PC-9 (cell line): ENCODE measurements at regions of chr15 and their contacts with region 1.

Region 1: DNA sequence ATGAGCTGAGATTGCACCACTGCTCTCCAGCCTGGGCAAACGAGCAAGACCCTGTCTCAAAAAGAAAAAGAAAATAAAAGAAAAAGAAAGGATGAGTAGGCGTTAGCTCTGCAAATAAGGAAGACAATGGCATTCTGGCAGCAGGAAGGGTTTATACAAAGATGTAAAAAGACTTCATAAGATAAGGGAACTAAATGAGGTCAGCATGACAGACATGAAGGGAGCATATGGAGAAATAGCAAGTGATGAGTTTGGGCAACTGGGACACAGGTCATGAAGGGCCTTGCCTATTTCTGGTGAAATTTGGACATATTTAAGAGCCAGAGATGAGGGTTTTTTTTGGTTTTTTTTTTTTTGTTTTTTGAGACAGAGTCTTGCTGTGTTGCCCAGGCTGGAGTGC is 24.5 kb downstream of the TMEM266 start:
- DNase-seq: no peak
- H3K4me3 ChIP-seq: no peak overlapping the region
- H3K27ac ChIP-seq: no peak overlapping the region
- H3K4me1 ChIP-seq: no peaks in the 10 kb centered on the region
- H3K27me3 ChIP-seq: no peaks in the 10 kb centered on the region
- CTCF ChIP-seq: no peak

Region 2: DNA sequence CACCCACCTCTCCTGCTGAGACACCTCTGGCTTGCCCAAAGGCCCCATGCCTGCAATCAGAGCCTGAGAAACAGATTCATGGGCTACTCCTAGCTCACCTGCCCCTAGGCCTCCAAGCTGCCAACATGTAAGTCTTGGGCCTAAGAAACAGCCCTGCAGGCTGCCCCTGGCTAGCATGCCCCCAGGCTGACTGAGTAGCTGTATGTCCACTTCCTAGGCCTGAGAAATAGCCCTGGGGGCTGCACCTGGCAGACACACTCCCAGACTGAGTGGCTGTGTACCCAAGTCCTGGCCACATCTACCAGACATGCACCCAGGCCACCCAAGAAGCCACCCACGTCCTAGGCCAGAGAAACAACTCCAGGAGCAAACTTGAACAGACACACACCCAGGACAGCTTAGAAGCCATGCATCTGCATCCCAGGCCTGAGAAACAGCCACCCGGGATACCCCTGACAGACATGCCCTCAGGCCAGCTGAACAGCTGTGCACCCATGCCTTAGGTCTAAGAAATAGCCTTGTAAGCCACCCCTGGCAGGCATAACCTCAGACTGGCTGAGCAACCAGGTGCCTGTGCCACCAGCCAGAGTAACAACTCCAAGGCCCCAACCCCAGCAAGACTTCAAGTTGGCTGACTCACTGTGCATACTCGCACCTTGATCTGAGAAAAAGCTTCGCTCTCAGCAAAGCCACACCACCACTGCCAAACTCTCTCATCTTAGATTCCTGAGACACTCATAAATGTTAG is 60.1 kb before region 1 on chr15:
- CTCF ChIA-PET with region 1: no interaction called
- POLR2A ChIA-PET with region 1: no interaction called
- intact Hi-C with region 1: loop called (anchors 2 kb)
- DNase-seq: no peak
- H3K4me3 ChIP-seq: no peak overlapping the region
- H3K27ac ChIP-seq: no peak overlapping the region
- H3K4me1 ChIP-seq: no peaks in the 10 kb centered on the region
- H3K27me3 ChIP-seq: no peaks in the 10 kb centered on the region
- CTCF ChIP-seq: no peak